Dendritic cell treated with granulocyte-macrophage colony-stimulating factor and Interleukin-4, amounts not matched to agents 40 ng/mL and 50 ng/mL, for 4 days (primary cell): ENCODE measurements at regions of chr18 and their contacts with region 1.

Region 1: DNA sequence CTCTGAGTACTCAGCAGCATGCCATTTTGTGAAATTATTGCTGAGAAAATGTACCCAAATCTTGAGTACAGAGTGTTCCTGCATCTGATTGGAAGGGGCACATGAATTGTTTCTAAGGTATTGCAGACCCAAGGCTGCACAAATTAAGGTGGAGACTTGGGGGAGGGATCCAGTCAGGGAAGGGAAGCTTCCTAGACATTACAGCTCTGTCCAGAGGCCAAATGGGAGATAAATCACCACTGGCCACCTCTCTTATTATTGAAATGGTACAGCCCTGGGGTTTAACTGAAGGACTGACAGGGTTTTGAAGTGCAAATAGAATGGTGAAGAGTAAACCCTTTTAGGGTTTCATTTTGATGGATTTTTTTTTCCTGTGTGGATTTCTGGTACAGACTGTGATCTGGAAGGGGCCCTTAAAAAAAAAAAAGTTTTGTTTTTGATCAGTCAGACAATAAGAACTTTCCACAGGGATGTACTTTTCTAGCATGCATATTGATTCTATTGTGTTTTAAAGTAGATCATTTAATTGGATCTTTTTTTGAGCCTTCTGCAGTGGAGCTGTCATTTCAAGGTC is 119.4 kb downstream of the GREB1L start:
- H3K4me3 Mint-ChIP-seq: no peak overlapping the region
- H3K27ac Mint-ChIP-seq: no peak overlapping the region
- H3K4me1 Mint-ChIP-seq: no peaks in the 10 kb centered on the region
- H3K27me3 Mint-ChIP-seq: no peaks in the 10 kb centered on the region

Region 2: DNA sequence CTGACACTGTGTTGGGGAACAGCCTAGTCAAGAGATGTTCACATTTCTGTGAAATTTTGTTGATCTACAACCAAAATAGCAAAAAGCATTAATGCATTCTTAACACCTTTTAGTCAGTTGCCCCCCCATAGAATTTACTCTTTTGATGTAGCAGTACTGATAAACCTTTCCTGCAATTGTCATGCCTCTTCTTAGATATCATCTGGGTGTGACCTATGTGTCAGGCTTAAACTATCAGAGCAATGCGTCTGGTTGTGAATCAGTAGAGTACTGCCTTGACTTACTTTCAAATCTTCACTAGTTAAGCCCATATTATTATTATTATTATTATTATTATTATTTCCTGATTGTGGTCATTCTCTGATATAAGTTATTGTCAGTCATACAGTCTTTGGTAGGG is 57.5 kb before region 1 on chr18:
- intact Hi-C with region 1: loop called (anchors 10 kb)
- H3K4me3 Mint-ChIP-seq: no peak overlapping the region
- H3K27ac Mint-ChIP-seq: no peak overlapping the region
- H3K4me1 Mint-ChIP-seq: no peaks in the 10 kb centered on the region
- H3K27me3 Mint-ChIP-seq: no peaks in the 10 kb centered on the region

Region 3: DNA sequence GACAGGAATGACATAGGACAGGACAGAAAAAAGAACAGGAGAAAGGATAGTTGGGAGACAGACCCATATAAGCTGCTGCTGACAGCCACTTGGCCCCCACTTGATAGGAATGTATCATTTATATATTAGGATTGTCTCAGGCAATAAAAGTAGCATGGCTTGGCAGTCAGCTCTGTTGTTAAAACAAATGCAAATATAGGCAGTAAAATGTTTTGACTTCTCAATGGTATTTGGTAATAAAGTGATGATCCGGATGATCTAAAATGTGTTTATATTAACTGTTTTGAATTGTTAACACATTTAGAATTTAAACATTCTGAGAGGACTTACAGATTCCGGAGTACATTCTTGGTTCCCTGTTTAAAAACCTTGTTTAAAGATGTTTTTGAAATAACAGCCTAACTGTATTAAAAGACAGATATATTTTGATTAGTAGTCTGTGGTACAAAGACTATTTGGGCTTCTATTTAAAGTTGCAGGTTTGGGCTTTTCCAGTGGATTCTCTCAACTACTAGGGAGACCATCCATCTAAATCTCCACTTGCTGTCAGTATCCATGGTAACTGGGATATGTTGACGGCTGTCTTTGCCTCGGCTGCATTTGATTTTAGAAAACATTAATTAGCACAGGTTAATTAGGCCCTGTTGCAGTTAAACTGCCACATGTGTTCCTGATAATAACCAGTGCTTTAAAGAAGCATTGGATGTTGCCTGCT is 91.6 kb after region 1 on chr18:
- intact Hi-C with region 1: no loop called
- H3K4me3 Mint-ChIP-seq: no peak overlapping the region
- H3K27ac Mint-ChIP-seq: no peak overlapping the region
- H3K4me1 Mint-ChIP-seq: peaks cover 7% of the 10 kb centered on the region
- H3K27me3 Mint-ChIP-seq: no peaks in the 10 kb centered on the region